ENCODE measurements at regions of chr6 and their contacts with region 1.

Region 1: GRCh38 chr6:104940881-104941728 is 15.8 kb upstream of the LIN28B start:
- DNase-seq: peak; percentile 46
- H3K4me3 Mint-ChIP-seq: peak overlapping the region; percentile 45
- H3K27ac Mint-ChIP-seq: no peak overlapping the region
- H3K4me1 Mint-ChIP-seq: peaks cover 5% of the 10 kb centered on the region
- H3K27me3 Mint-ChIP-seq: peaks cover 42% of the 10 kb centered on the region

Region 2: DNA sequence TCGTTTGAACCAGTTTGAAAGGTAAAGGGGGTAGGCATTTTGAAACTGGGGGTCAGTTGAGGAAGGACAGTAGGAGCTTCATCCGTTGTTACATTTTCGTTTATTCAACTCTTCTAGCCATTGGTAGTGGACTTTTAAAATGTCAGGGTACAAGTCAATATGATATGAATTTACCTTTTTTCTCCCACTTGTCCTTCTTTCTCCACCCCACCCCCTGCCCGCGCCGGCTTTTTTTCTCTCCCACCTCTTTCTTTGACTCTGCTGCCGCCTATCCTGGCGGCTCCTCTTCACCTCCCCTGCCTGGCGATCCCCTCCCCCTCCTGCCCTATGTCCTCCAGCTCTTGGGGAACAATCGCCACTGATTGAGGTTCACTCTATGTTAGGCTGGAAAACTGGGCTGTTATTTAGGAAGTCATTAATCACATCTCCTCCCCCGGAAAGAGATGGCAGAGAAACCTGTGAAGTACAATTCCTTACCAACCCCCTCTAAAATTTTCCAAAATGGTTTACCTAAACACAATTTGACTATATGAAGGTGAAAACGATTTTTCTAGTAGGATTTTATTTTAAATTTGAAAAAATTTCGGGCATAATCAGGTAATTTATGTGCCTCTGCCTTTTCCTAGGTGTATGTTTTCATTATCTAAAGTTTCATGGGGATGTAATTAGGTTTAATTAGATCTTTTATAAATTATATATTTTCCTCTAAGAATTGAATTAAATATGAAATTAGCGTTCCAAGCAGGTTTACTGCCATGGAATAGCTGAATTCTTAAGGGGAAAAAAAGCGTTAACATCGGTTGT is 15.0 kb after region 1 on chr6:
- CTCF ChIA-PET with region 1: no interaction called
- POLR2A ChIA-PET with region 1: no interaction called
- intact Hi-C with region 1: loop called (anchors 2 kb)
- DNase-seq: no peak
- H3K4me3 Mint-ChIP-seq: no peak overlapping the region
- H3K27ac Mint-ChIP-seq: no peak overlapping the region
- H3K4me1 Mint-ChIP-seq: peaks cover 14% of the 10 kb centered on the region
- H3K27me3 Mint-ChIP-seq: peaks cover 62% of the 10 kb centered on the region

Region 3: GRCh38 chr6:105077596-105078385 is 136.7 kb after region 1 on chr6:
- CTCF ChIA-PET with region 1: interaction called, 6 read pairs
- POLR2A ChIA-PET with region 1: no interaction called
- intact Hi-C with region 1: loop called (anchors 1 kb)
- DNase-seq: no peak
- H3K4me3 Mint-ChIP-seq: no peak overlapping the region
- H3K27ac Mint-ChIP-seq: no peak overlapping the region
- H3K4me1 Mint-ChIP-seq: no peaks in the 10 kb centered on the region
- H3K27me3 Mint-ChIP-seq: no peaks in the 10 kb centered on the region

Region 4: DNA sequence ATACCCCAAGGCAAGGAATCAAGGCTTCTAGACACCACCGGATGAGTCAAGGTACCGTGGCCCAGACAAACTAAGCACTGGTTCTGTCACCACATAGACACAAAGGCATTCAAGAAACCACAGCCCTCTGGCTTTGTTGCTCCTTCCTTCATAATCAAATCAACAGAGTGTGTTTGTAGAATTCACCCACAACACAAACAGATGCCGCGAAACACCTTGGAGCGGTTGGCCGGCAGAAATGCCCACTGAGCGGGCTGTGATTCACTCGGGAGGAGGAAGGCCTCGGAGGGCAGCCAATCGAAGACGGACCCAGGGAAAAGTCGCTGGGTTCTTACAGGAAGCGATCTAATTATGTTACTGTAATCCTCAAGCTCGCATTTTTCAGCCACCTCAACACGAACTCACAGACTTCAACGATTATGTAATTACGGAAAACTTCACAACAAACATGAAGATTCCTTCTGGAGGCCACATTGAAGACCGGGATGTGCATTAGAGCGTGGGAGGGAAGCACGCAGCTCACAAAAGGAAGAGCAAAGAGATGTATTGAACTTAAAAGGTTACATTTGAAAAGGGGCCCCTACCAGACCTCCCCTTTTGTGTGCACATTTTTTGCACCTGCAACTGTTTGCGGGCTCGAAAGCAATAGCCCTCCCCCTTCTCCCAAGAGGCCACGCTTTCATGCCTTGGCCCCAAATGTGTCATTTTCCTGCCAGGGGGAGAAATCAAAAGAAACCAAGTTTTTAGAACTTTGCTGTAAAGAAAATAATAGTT is 646.4 kb after region 1 on chr6:
- CTCF ChIA-PET with region 1: no interaction called
- POLR2A ChIA-PET with region 1: no interaction called
- intact Hi-C with region 1: no loop called
- DNase-seq: peak; percentile 37
- H3K4me3 Mint-ChIP-seq: no peak overlapping the region
- H3K27ac Mint-ChIP-seq: peak overlapping the region; percentile 51
- H3K4me1 Mint-ChIP-seq: peaks cover 40% of the 10 kb centered on the region
- H3K27me3 Mint-ChIP-seq: peaks cover 3% of the 10 kb centered on the region